ENCODE measurements at regions of chr14 and their contacts with region 1.

Region 1: DNA sequence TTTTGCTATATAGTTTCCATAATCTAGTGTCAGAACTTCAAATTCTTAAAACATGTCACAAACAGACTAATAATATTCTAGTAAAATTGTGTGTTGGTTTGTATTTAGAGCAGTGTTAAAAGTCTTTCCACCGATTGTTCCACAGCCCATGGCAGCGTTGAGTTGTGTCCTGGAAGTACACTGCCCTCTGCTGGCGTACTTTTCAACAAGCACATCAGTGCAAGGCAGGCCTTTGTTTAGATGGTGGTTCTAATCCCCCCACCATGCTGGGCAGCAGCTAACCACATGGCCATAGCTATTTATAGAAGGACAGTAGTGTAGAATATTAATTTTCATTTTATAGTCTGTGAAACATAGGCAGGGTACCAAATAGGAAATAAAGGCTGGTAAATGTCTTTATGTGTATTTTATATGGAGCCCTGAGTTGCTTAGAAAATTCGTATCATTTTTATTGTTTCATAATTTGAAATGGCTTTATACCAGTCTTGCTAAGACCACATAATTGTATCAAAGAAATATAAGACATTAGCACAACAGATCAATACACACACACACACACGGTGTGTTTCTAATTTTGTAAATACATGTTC is 235.4 kb downstream of the SEC23A start:
- DNase-seq: peak; percentile 68
- ATAC-seq: peak; percentile 86

Region 2: GRCh38 chr14:37903343-37904191 is 964.1 kb before region 1 on chr14:
- intact Hi-C with region 1: loop called (anchors 5 kb)
- DNase-seq: no peak
- ATAC-seq: peak; percentile 29

Region 3: DNA sequence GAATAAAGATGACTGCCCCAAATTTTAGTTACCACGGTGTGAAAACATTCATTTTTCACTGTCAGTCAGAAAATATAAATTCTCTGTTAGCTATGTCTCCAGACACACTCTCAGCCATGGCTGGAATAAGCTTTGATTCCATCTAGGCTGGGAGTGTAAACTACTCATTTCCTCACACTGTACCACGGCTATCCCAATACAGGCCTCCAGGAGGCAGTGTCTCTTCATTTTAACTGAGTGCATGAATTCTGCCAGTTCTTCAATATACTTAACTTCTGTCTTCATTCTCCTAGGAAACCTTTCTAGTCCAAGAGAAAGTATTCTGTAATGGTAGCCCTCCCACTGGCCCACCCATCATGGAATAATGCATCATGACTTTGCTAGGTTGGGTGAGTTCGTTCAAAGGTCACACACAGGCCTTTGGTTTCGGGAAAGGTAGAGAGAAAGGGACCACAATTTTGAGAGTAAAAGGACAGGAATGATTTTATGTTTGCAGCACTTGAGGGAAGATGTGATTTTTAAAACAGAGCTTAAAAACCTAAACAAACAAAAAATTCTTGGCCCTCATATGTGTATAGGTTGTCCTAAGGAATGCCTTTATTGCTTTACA is 145.7 kb before region 1 on chr14:
- intact Hi-C with region 1: loop called (anchors 2 kb)
- DNase-seq: no peak
- ATAC-seq: peak; percentile 44

Measured in Right ventricle myocardium inferior (tissue), 1 donor.